Activated CD4-positive, alpha-beta T cell treated with anti-CD3 and anti-CD28 coated beads for 36 hours (primary cell): ENCODE measurements at regions of chr2 and their contacts with region 1.

Region 1: GRCh38 chr2:27071277-27071989 is at the start of gene OST4:
- DNase-seq: peak; percentile 94
- ATAC-seq: peak; percentile 89
- H3K4me3 Mint-ChIP-seq: peak within 1 kb of the TSS; percentile 96
- H3K27ac Mint-ChIP-seq: peak within 1 kb of the TSS; percentile 91
- H3K4me1 Mint-ChIP-seq: peaks cover 66% of the 10 kb centered on the region
- H3K27me3 Mint-ChIP-seq: no peaks in the 10 kb centered on the region
- total RNA-seq, gene OST4: 305 to 406 TPM

Region 2: GRCh38 chr2:25756536-25756935 is 1314.9 kb before region 1 on chr2:
- CTCF ChIA-PET with region 1: no interaction called
- POLR2A ChIA-PET with region 1: no interaction called
- intact Hi-C with region 1: no loop called
- DNase-seq: no peak
- ATAC-seq: no peak
- H3K4me3 Mint-ChIP-seq: no peak overlapping the region
- H3K27ac Mint-ChIP-seq: no peak overlapping the region
- H3K4me1 Mint-ChIP-seq: peaks cover 19% of the 10 kb centered on the region
- H3K27me3 Mint-ChIP-seq: no peaks in the 10 kb centered on the region

Region 3: GRCh38 chr2:26785431-26786206 is 285.8 kb before region 1 on chr2 and contains the start of gene CENPA:
- CTCF ChIA-PET with region 1: no interaction called
- POLR2A ChIA-PET with region 1: no interaction called
- intact Hi-C with region 1: loop called in 1 of 2 experiments (anchors 2 kb)
- DNase-seq: peak; percentile 97
- ATAC-seq: peak; percentile 100
- H3K4me3 Mint-ChIP-seq: peak within 1 kb of the TSS; percentile 80
- H3K27ac Mint-ChIP-seq: peak within 1 kb of the TSS; percentile 79
- H3K4me1 Mint-ChIP-seq: peaks cover 16% of the 10 kb centered on the region
- H3K27me3 Mint-ChIP-seq: peaks cover 7% of the 10 kb centered on the region
- total RNA-seq, gene CENPA: 37.0 to 38.0 TPM

Region 4: GRCh38 chr2:26970244-26970920 is 101.1 kb before region 1 on chr2 and contains the start of gene MAPRE3:
- CTCF ChIA-PET with region 1: no interaction called
- POLR2A ChIA-PET with region 1: no interaction called
- intact Hi-C with region 1: loop called in 1 of 2 experiments (anchors 1 kb)
- DNase-seq: peak; percentile 86
- ATAC-seq: peak; percentile 93
- H3K4me3 Mint-ChIP-seq: peak within 1 kb of the TSS; percentile 72
- H3K27ac Mint-ChIP-seq: peak within 1 kb of the TSS; percentile 5
- H3K4me1 Mint-ChIP-seq: peaks cover 15% of the 10 kb centered on the region
- H3K27me3 Mint-ChIP-seq: peaks cover 11% of the 10 kb centered on the region
- total RNA-seq, gene MAPRE3: 3.2 to 4.1 TPM

Region 5: DNA sequence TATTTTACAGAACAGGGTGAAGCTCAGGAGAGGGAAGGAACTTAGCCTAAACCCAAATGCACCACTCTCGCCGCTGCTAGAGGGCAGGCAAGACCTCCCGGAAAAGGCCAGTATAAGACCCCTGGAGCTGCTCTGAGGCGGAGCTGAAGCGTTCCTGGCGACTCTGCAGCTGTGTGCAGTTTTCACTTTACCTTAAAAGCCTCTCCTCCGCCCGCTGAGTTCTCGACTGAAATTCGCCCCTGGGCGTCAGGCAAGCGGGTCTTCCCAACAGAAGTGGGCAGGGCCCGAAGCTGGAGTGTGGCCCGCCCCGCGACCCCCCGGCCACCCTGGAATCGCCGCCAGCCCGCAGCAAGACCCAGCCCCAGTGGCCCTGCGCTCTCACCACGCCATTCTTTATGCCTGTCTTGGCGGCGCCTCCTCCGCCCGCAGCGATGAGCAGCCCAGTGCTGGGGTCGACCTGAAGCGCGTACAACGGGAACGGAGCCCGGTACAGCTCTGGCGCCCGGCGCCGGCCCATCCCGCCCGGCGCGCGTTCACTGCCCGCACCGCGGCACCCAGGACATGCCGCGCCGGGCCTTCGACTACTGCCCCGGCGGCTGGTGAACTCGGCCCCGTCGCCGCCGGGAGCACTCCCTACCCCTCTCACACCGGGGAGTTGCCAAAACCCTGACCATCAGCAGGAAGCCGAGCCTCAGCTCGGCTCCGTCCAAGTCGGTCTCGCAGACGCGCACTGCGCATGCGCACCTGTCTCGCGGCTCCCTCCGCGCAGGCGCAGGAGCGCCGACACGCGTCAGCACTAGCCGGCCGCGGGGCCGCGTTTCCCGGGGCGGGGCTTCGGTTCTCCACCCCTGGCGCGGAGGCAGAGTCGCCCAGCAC is 62.7 kb after region 1 on chr2 and contains the start of gene PREB:
- CTCF ChIA-PET with region 1: interaction called, 3 read pairs
- POLR2A ChIA-PET with region 1: interaction called, 4 read pairs
- intact Hi-C with region 1: loop called in 1 of 2 experiments (anchors 1 kb)
- DNase-seq: peak; percentile 99
- ATAC-seq: peak; percentile 97
- H3K4me3 Mint-ChIP-seq: peak within 1 kb of the TSS; percentile 81
- H3K27ac Mint-ChIP-seq: peak within 1 kb of the TSS; percentile 94
- H3K4me1 Mint-ChIP-seq: peaks cover 16% of the 10 kb centered on the region
- H3K27me3 Mint-ChIP-seq: no peaks in the 10 kb centered on the region
- total RNA-seq, gene PREB: 59.7 to 59.9 TPM

Region 6: GRCh38 chr2:27217217-27218121 is 146.0 kb after region 1 on chr2 and contains the start of gene CAD:
- CTCF ChIA-PET with region 1: no interaction called
- POLR2A ChIA-PET with region 1: no interaction called
- intact Hi-C with region 1: loop called in 1 of 2 experiments (anchors 1 kb)
- DNase-seq: peak; percentile 94
- ATAC-seq: peak; percentile 90
- H3K4me3 Mint-ChIP-seq: peak within 1 kb of the TSS; percentile 93
- H3K27ac Mint-ChIP-seq: peak within 1 kb of the TSS; percentile 87
- H3K4me1 Mint-ChIP-seq: peaks cover 37% of the 10 kb centered on the region
- H3K27me3 Mint-ChIP-seq: no peaks in the 10 kb centered on the region
- total RNA-seq, gene CAD: 107 to 147 TPM